Mammary epithelial cell (primary cell): ENCODE measurements at regions of chr10 and their contacts with region 1.

Region 1: DNA sequence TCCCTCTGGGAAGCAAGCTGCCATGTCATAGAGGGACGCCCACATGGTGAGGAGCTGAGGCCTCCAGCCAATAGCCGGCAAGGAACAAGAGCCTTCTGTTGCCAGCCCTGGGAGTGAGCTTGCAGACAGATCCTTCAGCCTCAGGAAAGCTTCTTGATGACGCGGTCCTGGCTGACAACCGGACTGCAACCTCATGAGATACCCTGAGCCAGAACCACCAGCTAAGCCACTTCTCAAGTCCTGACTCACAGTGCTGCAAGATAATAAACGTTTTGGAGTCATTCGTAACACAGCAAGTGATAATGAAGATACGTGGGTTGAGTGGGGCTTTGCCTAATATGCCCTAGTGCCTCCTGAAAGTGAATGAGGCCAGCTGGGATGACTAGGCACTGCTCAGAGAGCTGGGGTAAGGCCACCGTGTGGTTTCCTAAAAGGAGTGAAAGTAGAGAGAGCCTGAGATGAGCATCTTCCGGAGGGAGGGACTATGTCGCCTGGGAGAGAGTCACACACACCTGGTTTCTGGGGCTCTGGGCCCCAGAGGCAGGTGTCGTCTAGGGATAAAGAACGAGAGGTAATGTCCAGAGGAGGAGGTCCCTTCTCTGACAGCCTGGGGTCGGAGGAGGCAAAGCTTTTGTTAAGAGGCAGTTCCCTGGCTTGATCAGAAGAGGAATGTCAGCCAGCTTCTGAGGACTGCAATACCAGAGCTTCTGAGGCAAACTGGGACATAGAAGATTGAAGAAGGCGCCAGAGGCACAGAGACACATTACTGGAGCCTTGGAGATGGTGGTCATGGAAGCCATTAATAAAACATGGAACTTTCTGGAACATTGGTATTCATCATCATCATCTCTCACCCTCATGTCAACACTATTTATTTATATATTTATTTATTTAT is 53.6 kb downstream of the PYROXD2 start:
- DNase-seq: peak; percentile 95
- H3K4me3 ChIP-seq: no peak overlapping the region
- H3K27ac ChIP-seq: peak overlapping the region; percentile 17
- H3K4me1 ChIP-seq: peaks cover 11% of the 10 kb centered on the region
- H3K27me3 ChIP-seq: no peaks in the 10 kb centered on the region
- CTCF ChIP-seq: no peak

Region 2: GRCh38 chr10:98096316-98096715 is 265.1 kb before region 1 on chr10:
- CTCF ChIA-PET with region 1: no interaction called
- dilution Hi-C with region 1: no loop called
- in situ Hi-C with region 1: no loop called
- intact Hi-C with region 1: no loop called
- DNase-seq: no peak
- H3K4me3 ChIP-seq: no peak overlapping the region
- H3K27ac ChIP-seq: no peak overlapping the region
- H3K4me1 ChIP-seq: no peaks in the 10 kb centered on the region
- H3K27me3 ChIP-seq: peaks cover 5% of the 10 kb centered on the region
- CTCF ChIP-seq: no peak

Region 3: GRCh38 chr10:98106520-98106919 is 254.9 kb before region 1 on chr10:
- CTCF ChIA-PET with region 1: interaction called, 43 read pairs
- dilution Hi-C with region 1: no loop called
- in situ Hi-C with region 1: no loop called
- intact Hi-C with region 1: no loop called
- DNase-seq: peak; percentile 55
- H3K4me3 ChIP-seq: no peak overlapping the region
- H3K27ac ChIP-seq: no peak overlapping the region
- H3K4me1 ChIP-seq: no peaks in the 10 kb centered on the region
- H3K27me3 ChIP-seq: peaks cover 5% of the 10 kb centered on the region
- CTCF ChIP-seq: no peak

Region 4: DNA sequence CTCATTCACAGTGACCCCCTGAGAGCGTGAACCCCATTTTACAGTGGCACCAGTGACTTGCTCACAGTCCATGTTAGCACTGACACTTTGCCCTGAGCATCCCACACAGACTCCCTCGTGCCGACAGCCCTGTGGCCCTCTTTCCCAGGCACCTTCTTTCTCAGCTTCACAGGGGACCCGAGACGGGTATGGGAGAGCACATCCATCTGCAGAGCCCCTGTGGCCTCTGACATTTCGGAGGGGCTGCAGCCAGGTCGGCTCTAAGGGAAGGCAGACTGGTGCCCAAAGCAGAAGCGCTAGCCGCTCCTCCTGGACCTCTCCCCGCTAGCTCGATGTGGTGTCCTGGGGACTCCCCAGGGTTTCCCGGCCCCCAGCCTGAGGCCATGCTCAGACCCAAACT is 104.1 kb before region 1 on chr10:
- CTCF ChIA-PET with region 1: interaction called, 11 read pairs
- dilution Hi-C with region 1: no loop called
- in situ Hi-C with region 1: no loop called
- intact Hi-C with region 1: no loop called
- DNase-seq: no peak
- H3K4me3 ChIP-seq: no peak overlapping the region
- H3K27ac ChIP-seq: no peak overlapping the region
- H3K4me1 ChIP-seq: no peaks in the 10 kb centered on the region
- H3K27me3 ChIP-seq: no peaks in the 10 kb centered on the region
- CTCF ChIP-seq: no peak

Region 5: GRCh38 chr10:98326621-98327027 is 34.8 kb before region 1 on chr10:
- CTCF ChIA-PET with region 1: no interaction called
- dilution Hi-C with region 1: loop called (anchors 5 kb)
- in situ Hi-C with region 1: no loop called
- intact Hi-C with region 1: no loop called
- DNase-seq: no peak
- H3K4me3 ChIP-seq: no peak overlapping the region
- H3K27ac ChIP-seq: no peak overlapping the region
- H3K4me1 ChIP-seq: peaks cover 9% of the 10 kb centered on the region
- H3K27me3 ChIP-seq: no peaks in the 10 kb centered on the region
- CTCF ChIP-seq: no peak

Region 6: GRCh38 chr10:98404571-98405359 is 43.4 kb after region 1 on chr10:
- CTCF ChIA-PET with region 1: no interaction called
- dilution Hi-C with region 1: loop called (anchors 5 kb)
- in situ Hi-C with region 1: no loop called
- intact Hi-C with region 1: no loop called
- DNase-seq: peak; percentile 60
- H3K4me3 ChIP-seq: no peak overlapping the region
- H3K27ac ChIP-seq: peak overlapping the region; percentile 22
- H3K4me1 ChIP-seq: peaks cover 12% of the 10 kb centered on the region
- H3K27me3 ChIP-seq: no peaks in the 10 kb centered on the region
- CTCF ChIP-seq: no peak

Region 7: GRCh38 chr10:98899018-98899417 is 537.6 kb after region 1 on chr10:
- CTCF ChIA-PET with region 1: no interaction called
- dilution Hi-C with region 1: no loop called
- in situ Hi-C with region 1: no loop called
- intact Hi-C with region 1: no loop called
- DNase-seq: no peak
- H3K4me3 ChIP-seq: no peak overlapping the region
- H3K27ac ChIP-seq: no peak overlapping the region
- H3K4me1 ChIP-seq: no peaks in the 10 kb centered on the region
- H3K27me3 ChIP-seq: no peaks in the 10 kb centered on the region
- CTCF ChIP-seq: no peak

Region 8: DNA sequence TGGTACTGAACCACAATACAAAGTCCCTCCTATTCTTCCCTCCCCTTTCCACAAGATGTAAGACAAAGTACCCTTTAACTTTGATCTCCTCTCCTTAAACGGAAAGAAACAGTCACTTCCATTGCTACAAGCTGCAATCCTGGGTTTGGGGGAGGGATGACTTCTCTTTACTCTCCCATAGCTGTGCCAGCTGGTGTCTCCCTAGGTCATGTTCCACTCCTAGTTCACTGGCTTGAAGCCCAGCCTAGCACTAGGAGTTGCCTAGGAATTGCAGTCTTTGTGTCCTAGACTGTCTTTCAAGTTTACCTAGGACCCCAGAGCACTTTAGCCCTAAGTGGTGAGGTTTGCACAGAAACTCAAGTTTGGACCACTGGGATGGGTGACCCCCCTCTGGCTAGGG is 563.1 kb after region 1 on chr10:
- CTCF ChIA-PET with region 1: no interaction called
- dilution Hi-C with region 1: no loop called
- in situ Hi-C with region 1: no loop called
- intact Hi-C with region 1: no loop called
- DNase-seq: no peak
- H3K4me3 ChIP-seq: no peak overlapping the region
- H3K27ac ChIP-seq: no peak overlapping the region
- H3K4me1 ChIP-seq: no peaks in the 10 kb centered on the region
- H3K27me3 ChIP-seq: no peaks in the 10 kb centered on the region
- CTCF ChIP-seq: no peak